ENCODE measurements at regions of chr3 and their contacts with region 1.

Region 1: DNA sequence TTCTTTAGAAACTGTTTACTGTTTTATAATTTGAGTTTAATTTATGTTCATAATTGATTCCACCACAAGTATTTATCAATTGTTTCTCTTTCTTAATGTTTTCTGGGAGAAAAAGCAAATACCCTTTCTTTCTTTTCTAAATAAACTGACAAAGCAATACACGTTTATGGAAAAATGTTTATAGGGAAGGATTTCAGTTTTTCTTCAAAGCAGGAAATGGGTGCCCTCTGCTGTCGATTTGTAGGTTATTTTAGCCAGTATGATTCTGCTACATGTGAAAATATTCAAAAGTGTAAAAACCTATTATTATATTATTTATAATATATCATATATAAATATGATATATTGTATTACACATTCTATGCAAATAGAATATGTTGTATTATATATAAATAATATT is 921.0 kb upstream of the ROBO1 start:
- DNase-seq: no peak
- H3K4me3 ChIP-seq: no peak overlapping the region
- H3K27ac ChIP-seq: no peak overlapping the region
- H3K4me1 ChIP-seq: no peaks in the 10 kb centered on the region
- H3K27me3 ChIP-seq: no peaks in the 10 kb centered on the region
- CTCF ChIP-seq: peak in 4 of 5 experiments; percentile 18 to 36 (median 24)
- EP300 ChIP-seq: no peak
- POLR2A ChIP-seq: no peak

Region 2: GRCh38 chr3:79521238-79521848 is 1167.5 kb before region 1 on chr3:
- in situ Hi-C with region 1: loop called in 2 of 4 experiments (anchors 25 kb)
- intact Hi-C with region 1: no loop called
- DNase-seq: no peak
- H3K4me3 ChIP-seq: no peak overlapping the region
- H3K27ac ChIP-seq: no peak overlapping the region
- H3K4me1 ChIP-seq: no peaks in the 10 kb centered on the region
- H3K27me3 ChIP-seq: no peaks in the 10 kb centered on the region
- CTCF ChIP-seq: peak in 4 of 5 experiments; percentile 46 to 50 (median 48)
- EP300 ChIP-seq: no peak
- POLR2A ChIP-seq: no peak

Region 3: GRCh38 chr3:79534727-79535126 is 1154.1 kb before region 1 on chr3:
- in situ Hi-C with region 1: loop called in 1 of 4 experiments (anchors 25 kb)
- intact Hi-C with region 1: no loop called
- DNase-seq: no peak
- H3K4me3 ChIP-seq: no peak overlapping the region
- H3K27ac ChIP-seq: no peak overlapping the region
- H3K4me1 ChIP-seq: no peaks in the 10 kb centered on the region
- H3K27me3 ChIP-seq: no peaks in the 10 kb centered on the region
- CTCF ChIP-seq: no peak
- EP300 ChIP-seq: no peak
- POLR2A ChIP-seq: no peak

Region 4: DNA sequence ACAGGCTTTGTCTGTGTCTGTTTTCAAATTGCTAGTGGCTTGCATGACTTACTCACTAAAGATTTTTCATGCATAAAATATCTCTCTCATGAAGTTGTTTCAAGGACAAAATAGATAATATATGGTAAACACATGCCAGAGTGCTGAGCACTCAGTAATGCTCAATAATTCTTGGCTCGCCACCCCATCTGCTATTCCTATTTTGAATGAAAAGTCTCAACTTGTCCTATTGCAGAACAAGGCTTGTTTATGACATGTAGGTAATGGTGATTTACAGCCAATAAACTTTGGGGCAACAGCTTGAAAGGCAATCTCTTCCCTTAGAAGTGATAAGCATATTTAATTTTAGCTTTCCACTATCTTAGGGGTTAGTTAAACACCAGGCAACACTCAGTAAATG is 132.1 kb before region 1 on chr3:
- in situ Hi-C with region 1: no loop called
- intact Hi-C with region 1: no loop called
- DNase-seq: no peak
- H3K4me3 ChIP-seq: no peak overlapping the region
- H3K27ac ChIP-seq: no peak overlapping the region
- H3K4me1 ChIP-seq: no peaks in the 10 kb centered on the region
- H3K27me3 ChIP-seq: no peaks in the 10 kb centered on the region
- CTCF ChIP-seq: no peak
- EP300 ChIP-seq: no peak
- POLR2A ChIP-seq: no peak

Region 5: DNA sequence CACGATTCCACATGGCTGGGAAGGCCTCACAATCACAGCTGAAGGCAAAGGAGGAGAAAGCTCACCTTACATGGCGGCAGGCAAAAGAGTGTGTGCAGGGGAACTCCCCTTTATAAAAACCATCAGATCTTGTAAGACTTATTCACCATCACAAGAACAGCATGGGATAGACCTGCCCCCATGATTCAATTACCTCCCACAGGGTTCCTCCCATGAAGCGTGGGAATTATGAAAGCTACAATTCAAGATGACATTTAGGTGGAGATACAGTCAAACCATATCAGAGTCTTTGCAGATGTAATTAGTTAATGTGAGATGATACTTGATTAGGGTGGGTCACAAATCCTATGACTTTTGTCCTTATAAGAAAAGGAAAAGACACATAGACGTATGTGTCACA is 383.8 kb after region 1 on chr3:
- in situ Hi-C with region 1: no loop called
- intact Hi-C with region 1: no loop called
- DNase-seq: no peak
- H3K4me3 ChIP-seq: no peak overlapping the region
- H3K27ac ChIP-seq: no peak overlapping the region
- H3K4me1 ChIP-seq: no peaks in the 10 kb centered on the region
- H3K27me3 ChIP-seq: no peaks in the 10 kb centered on the region
- CTCF ChIP-seq: no peak
- EP300 ChIP-seq: no peak
- POLR2A ChIP-seq: no peak